ENCODE measurements at regions of chr6 and their contacts with region 1.

Region 1: DNA sequence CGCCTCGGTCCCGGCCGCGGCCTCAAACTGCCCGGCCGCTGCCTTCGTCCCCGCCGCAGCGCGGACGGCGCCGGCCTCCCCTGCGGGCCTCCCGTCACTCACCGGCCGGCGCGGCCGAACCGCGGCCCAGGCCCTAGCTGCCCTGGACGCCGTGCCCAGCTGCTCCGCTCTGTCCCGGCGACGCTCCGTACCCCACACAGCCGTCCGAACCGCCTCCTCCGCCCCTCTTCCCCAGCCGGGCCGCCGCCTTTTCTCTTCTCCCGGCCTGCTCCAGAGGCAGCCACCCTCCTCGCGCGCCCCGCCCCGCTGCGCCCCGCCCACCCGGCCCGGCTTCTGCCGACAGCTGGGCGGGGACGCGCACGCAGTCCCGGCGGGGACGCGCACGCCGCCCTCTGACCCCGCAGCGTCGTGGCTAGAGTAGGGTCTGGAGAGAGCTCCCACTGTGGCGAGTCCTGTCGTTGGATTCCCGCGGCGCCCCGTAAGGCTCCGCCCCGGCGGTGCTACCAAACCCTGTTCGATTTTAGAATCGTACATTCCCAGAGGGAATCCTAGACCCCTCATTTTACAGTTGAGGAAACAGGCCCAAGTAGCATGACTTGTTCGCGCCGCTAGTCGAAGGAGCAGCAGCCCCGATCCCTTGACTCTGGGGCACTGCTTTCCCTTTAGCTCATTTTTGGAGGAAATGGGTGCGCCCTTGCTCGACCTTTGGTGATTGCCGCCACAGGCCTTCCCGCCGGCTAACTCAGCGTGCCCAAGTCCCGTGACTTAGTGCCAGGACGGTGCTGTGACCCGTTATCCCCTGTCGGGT is at the start of gene FBXO30:
- DNase-seq: peak; percentile 86
- H3K4me3 Mint-ChIP-seq: peak within 1 kb of the TSS; percentile 81
- H3K27ac Mint-ChIP-seq: peak within 1 kb of the TSS; percentile 95
- H3K4me1 Mint-ChIP-seq: peaks cover 32% of the 10 kb centered on the region
- H3K27me3 Mint-ChIP-seq: no peaks in the 10 kb centered on the region
- CTCF ChIP-seq: no peak
- total RNA-seq, gene FBXO30: 10.6 and 10.9 TPM in 2 replicates

Region 2: DNA sequence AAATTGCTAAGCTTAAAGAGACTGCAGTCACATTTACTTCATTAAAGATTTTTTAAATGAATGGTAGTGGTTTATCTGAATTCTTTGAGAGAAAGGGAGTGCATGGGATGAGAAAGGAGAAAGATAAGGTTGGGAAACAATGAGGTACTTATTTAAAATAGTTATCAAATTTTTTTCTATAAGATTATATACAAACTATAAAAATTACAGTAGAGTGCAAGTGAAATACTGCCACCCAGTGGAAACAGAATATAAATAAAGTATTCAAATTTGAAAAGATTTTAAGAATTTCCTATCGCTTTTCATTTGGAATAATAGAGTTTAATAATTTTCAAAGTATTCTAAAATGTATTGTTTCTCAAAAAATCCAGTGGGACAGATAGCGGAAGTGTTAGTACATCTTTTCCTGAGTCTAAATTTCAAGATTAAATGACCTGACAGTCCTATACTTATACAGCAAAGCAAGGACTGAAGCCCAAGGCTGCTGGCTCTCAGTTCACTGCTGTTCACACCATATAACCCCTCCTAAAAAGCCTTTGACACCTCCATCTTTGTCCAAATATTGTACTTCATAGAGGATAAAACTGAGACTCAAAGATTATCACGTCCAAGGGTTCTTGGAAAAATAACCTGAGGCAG is 110.4 kb before region 1 on chr6:
- CTCF ChIA-PET with region 1: no interaction called
- POLR2A ChIA-PET with region 1: no interaction called
- intact Hi-C with region 1: no loop called
- DNase-seq: peak; percentile 19
- H3K4me3 Mint-ChIP-seq: no peak overlapping the region
- H3K27ac Mint-ChIP-seq: no peak overlapping the region
- H3K4me1 Mint-ChIP-seq: peaks cover 11% of the 10 kb centered on the region
- H3K27me3 Mint-ChIP-seq: no peaks in the 10 kb centered on the region
- CTCF ChIP-seq: peak; percentile 51

Region 3: GRCh38 chr6:145743332-145743731 is 71.4 kb before region 1 on chr6:
- CTCF ChIA-PET with region 1: interaction called, 3 read pairs
- POLR2A ChIA-PET with region 1: interaction called, 158 read pairs
- intact Hi-C with region 1: no loop called
- DNase-seq: no peak
- H3K4me3 Mint-ChIP-seq: no peak overlapping the region
- H3K27ac Mint-ChIP-seq: no peak overlapping the region
- H3K4me1 Mint-ChIP-seq: peaks cover 6% of the 10 kb centered on the region
- H3K27me3 Mint-ChIP-seq: no peaks in the 10 kb centered on the region
- CTCF ChIP-seq: no peak

Region 4: DNA sequence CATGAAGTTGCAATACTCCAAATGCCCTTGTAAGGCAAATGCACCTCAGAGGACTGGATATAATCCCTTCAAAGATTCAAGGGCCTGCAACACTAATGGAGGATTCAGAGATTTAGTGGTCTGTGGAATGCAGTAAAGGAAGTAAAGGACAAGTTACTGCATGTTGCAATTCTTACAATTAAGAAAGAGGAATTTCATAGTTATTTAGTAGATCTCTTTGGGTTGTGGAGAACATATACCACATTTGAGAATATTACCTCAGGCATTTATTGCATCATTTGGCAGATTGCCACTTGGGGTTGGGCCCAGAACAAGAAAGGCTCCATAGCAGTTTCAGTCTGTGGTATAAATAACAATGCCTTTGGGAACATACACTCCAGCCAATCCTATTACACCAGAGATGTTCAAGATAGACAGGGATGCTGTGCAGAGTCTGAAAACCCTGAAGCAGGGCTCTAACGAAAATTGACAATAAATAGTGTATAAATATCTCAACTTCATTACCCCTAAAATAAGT is 58.5 kb before region 1 on chr6:
- CTCF ChIA-PET with region 1: no interaction called
- POLR2A ChIA-PET with region 1: interaction called, 10 read pairs
- intact Hi-C with region 1: no loop called
- DNase-seq: peak; percentile 96
- H3K4me3 Mint-ChIP-seq: no peak overlapping the region
- H3K27ac Mint-ChIP-seq: peak overlapping the region; percentile 25
- H3K4me1 Mint-ChIP-seq: peaks cover 18% of the 10 kb centered on the region
- H3K27me3 Mint-ChIP-seq: no peaks in the 10 kb centered on the region
- CTCF ChIP-seq: no peak

Region 5: GRCh38 chr6:145836170-145836569 is 21.5 kb after region 1 on chr6:
- CTCF ChIA-PET with region 1: no interaction called
- POLR2A ChIA-PET with region 1: interaction called, 15 read pairs
- intact Hi-C with region 1: no loop called
- DNase-seq: peak; percentile 79
- H3K4me3 Mint-ChIP-seq: no peak overlapping the region
- H3K27ac Mint-ChIP-seq: peak overlapping the region; percentile 33
- H3K4me1 Mint-ChIP-seq: peaks cover 12% of the 10 kb centered on the region
- H3K27me3 Mint-ChIP-seq: no peaks in the 10 kb centered on the region
- CTCF ChIP-seq: no peak

Region 6: DNA sequence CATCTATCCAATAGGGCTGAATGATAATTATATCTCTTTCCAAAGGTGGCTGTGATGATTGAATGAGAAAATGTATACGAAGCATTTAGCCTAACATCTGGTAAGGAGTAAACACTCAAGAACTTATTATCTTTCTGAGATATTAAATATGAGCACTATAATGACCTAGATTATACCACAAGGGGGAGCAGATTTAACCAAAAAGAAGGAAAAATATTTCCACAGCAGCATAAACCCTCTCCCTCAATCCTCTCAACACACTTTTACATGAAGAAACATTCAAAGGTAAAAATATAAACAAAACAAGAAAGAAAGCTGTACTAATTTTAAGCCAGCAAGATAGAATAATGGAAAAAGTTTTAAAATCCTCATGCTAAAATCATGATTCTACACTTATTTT is 81.1 kb after region 1 on chr6:
- CTCF ChIA-PET with region 1: interaction called, 5 read pairs
- POLR2A ChIA-PET with region 1: interaction called, 4 read pairs
- intact Hi-C with region 1: loop called (anchors 5 kb)
- DNase-seq: peak; percentile 17
- H3K4me3 Mint-ChIP-seq: no peak overlapping the region
- H3K27ac Mint-ChIP-seq: no peak overlapping the region
- H3K4me1 Mint-ChIP-seq: no peaks in the 10 kb centered on the region
- H3K27me3 Mint-ChIP-seq: no peaks in the 10 kb centered on the region
- CTCF ChIP-seq: peak; percentile 24

Region 7: GRCh38 chr6:145963216-145964068 is 148.7 kb after region 1 on chr6:
- CTCF ChIA-PET with region 1: no interaction called
- POLR2A ChIA-PET with region 1: interaction called, 11 read pairs
- intact Hi-C with region 1: no loop called
- DNase-seq: peak; percentile 47
- H3K4me3 Mint-ChIP-seq: peak overlapping the region; percentile 96
- H3K27ac Mint-ChIP-seq: peak overlapping the region; percentile 98
- H3K4me1 Mint-ChIP-seq: peaks cover 20% of the 10 kb centered on the region
- H3K27me3 Mint-ChIP-seq: no peaks in the 10 kb centered on the region
- CTCF ChIP-seq: no peak

Region 8: GRCh38 chr6:146543211-146543939 is 728.7 kb after region 1 on chr6 and contains the start of gene RAB32:
- CTCF ChIA-PET with region 1: no interaction called
- POLR2A ChIA-PET with region 1: interaction called, 3 read pairs
- intact Hi-C with region 1: loop called (anchors 10 kb)
- DNase-seq: peak; percentile 93
- H3K4me3 Mint-ChIP-seq: peak within 1 kb of the TSS; percentile 94
- H3K27ac Mint-ChIP-seq: peak within 1 kb of the TSS; percentile 97
- H3K4me1 Mint-ChIP-seq: peaks cover 13% of the 10 kb centered on the region
- H3K27me3 Mint-ChIP-seq: no peaks in the 10 kb centered on the region
- CTCF ChIP-seq: peak; percentile 64
- total RNA-seq, gene RAB32: 39.7 and 73.6 TPM in 2 replicates